ENCODE measurements at regions of chr13 and their contacts with region 1.

Region 1: DNA sequence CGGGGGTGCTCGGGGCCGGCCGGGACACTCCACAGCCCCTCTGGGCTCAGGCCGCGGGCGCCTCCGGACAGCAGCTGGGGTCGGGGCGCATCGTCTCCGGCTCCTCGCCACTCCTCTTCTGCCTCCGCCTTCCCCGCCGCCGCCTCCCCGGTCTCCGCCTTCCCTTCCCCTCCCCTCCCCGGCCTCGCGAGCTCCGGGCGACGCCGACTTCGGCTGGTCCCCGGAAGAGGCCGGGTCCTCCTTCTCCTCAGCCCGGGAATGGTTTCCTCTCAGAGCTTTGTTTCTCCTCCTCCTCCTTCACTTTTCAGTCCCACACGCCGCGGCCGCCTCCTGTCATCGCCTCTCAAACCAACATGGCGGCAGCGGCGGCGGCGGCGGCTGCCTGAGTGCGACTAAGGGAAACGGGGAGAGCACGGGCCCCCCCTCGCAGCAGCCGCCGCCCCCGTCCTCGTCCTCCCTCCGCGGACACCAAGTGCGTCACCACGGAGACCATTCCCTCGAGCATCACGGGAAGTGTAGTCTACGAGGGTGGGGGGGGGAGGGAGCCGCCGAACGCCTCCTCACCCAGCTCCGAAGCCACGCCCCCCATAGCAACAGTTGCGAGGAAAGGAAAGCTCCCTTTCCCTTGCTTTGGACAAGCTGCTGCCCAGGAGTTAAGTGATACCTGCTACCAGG is at the start of gene UBL3:
- DNase-seq: peak; percentile 91 to 98
- H3K4me3 ChIP-seq: peak within 1 kb of the TSS; percentile 76 to 95
- H3K27ac ChIP-seq: peak within 1 kb of the TSS; percentile 97 to 98
- H3K4me1 ChIP-seq: peaks cover 0 to 11% of the 10 kb centered on the region in 2 donors
- H3K27me3 ChIP-seq: no peaks in the 10 kb centered on the region
- CTCF ChIP-seq: no peak
- total RNA-seq, gene UBL3: 17.9 TPM

Region 2: GRCh38 chr13:29435125-29435911 is 415.0 kb before region 1 on chr13:
- intact Hi-C with region 1: loop called (anchors 10 kb)
- DNase-seq: peak in 1 of 2 donors; percentile 63
- H3K4me3 ChIP-seq: no peak overlapping the region
- H3K27ac ChIP-seq: peak overlapping the region; percentile 88 to 90
- H3K4me1 ChIP-seq: peaks cover 22 to 59% of the 10 kb centered on the region in 2 donors
- H3K27me3 ChIP-seq: no peaks in the 10 kb centered on the region
- CTCF ChIP-seq: no peak

Region 3: GRCh38 chr13:29513397-29514322 is 336.7 kb before region 1 on chr13:
- intact Hi-C with region 1: loop called (anchors 5 kb)
- DNase-seq: no peak
- H3K4me3 ChIP-seq: no peak overlapping the region
- H3K27ac ChIP-seq: no peak overlapping the region
- H3K4me1 ChIP-seq: no peaks in the 10 kb centered on the region
- H3K27me3 ChIP-seq: no peaks in the 10 kb centered on the region
- CTCF ChIP-seq: no peak

Region 4: GRCh38 chr13:29522044-29522685 is 328.2 kb before region 1 on chr13:
- intact Hi-C with region 1: loop called (anchors 5 kb)
- DNase-seq: peak in 1 of 2 donors; percentile 89
- H3K4me3 ChIP-seq: no peak overlapping the region
- H3K27ac ChIP-seq: peak overlapping the region; percentile 50 to 65
- H3K4me1 ChIP-seq: peaks cover 3 to 10% of the 10 kb centered on the region in 2 donors
- H3K27me3 ChIP-seq: no peaks in the 10 kb centered on the region
- CTCF ChIP-seq: no peak

Region 5: DNA sequence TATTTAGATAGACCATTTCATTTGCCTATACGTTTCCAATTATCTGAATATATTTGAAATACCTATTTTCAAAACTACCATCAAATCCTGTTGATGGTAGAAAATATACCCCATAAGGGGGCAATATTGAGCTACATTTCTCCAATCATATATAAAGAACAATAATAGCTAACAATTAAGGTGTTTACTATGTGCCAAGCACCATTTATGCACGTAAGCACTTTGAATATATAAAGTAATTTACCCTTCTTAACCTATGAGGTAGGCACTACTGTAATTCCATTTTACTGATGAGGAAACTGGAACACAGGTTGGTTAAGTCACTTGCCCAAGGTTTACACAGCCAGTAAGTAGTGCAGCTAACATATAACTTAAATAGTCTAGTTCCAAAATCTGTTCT is 79.1 kb before region 1 on chr13:
- intact Hi-C with region 1: loop called (anchors 10 kb)
- DNase-seq: no peak
- H3K4me3 ChIP-seq: no peak overlapping the region
- H3K27ac ChIP-seq: no peak overlapping the region
- H3K4me1 ChIP-seq: no peaks in the 10 kb centered on the region
- H3K27me3 ChIP-seq: no peaks in the 10 kb centered on the region
- CTCF ChIP-seq: peak; percentile 16 to 49 (median 41)

Region 6: DNA sequence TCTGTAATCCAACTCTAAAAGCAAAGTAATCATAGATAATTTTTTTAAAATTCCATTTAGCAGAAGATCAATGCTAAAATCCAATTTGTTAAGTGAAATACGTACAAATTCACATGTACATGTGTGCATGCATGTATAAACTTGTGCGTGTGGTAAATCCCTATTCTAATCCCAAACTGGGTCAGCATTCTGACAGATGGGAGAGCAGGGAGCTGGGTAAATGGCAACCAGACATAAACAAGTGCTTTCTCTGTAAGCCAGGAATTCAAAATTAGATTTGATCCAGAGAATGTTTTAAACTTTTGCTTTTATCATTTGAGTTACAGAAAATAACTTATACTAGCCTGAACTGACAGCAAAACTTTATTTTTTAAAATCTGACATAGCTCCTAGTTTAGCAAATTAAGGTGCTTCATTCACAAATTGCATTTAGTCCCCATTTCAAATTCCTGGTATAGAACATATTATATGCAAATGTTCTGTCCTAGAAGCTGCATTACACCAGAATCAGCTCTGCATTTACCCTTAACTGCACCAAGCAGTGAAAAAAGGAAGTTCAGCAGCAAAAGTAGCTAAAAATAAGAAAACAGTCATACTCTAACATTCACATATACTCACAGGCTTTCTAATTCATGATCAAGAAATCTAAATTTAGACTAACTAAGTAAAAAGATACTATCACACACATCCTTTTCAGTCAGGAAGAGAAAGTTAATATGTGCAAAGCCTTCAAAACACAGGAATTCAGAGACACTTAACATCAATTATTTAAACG is 32.6 kb before region 1 on chr13:
- intact Hi-C with region 1: no loop called
- DNase-seq: no peak
- H3K4me3 ChIP-seq: no peak overlapping the region
- H3K27ac ChIP-seq: no peak overlapping the region
- H3K4me1 ChIP-seq: peaks cover 0 to 11% of the 10 kb centered on the region in 2 donors
- H3K27me3 ChIP-seq: no peaks in the 10 kb centered on the region
- CTCF ChIP-seq: no peak

Region 7: GRCh38 chr13:29923554-29924481 is 73.5 kb after region 1 on chr13:
- intact Hi-C with region 1: loop called (anchors 1 kb)
- DNase-seq: peak; percentile 81 to 96
- H3K4me3 ChIP-seq: no peak overlapping the region
- H3K27ac ChIP-seq: peak overlapping the region; percentile 85 to 93
- H3K4me1 ChIP-seq: peaks cover 15 to 36% of the 10 kb centered on the region in 2 donors
- H3K27me3 ChIP-seq: no peaks in the 10 kb centered on the region
- CTCF ChIP-seq: peak; percentile 80 to 92 (median 91)

Region 8: GRCh38 chr13:30114571-30115256 is 264.4 kb after region 1 on chr13:
- intact Hi-C with region 1: loop called (anchors 2 kb)
- DNase-seq: peak; percentile 56 to 95
- H3K4me3 ChIP-seq: peak overlapping the region; percentile 75 to 76
- H3K27ac ChIP-seq: peak overlapping the region; percentile 54 to 60
- H3K4me1 ChIP-seq: peaks cover 0 to 10% of the 10 kb centered on the region in 2 donors
- H3K27me3 ChIP-seq: no peaks in the 10 kb centered on the region
- CTCF ChIP-seq: peak; percentile 84 to 95 (median 88)

Measured in ascending aorta (tissue), 2 donors.